GM12878 (cell line): ENCODE measurements at regions of chr22 and their contacts with region 1.

Region 1: GRCh38 chr22:50474668-50475492 is at the start of gene SBF1:
- DNase-seq: peak; percentile 43
- ATAC-seq: peak; percentile 81
- H3K4me3 ChIP-seq: peak within 1 kb of the TSS; percentile 96
- H3K27ac ChIP-seq: peak within 1 kb of the TSS; percentile 48; the same call in 1 of the 2 replicates
- H3K4me1 ChIP-seq: peaks cover 44% of the 10 kb centered on the region
- H3K27me3 ChIP-seq: no peaks in the 10 kb centered on the region
- CTCF ChIP-seq: no peak
- EP300 ChIP-seq: no peak
- POLR2A ChIP-seq: peak; percentile 63
- RAD21 ChIP-seq: no peak
- polyA plus RNA-seq, gene SBF1: 0.23 to 1.2 TPM

Region 2: DNA sequence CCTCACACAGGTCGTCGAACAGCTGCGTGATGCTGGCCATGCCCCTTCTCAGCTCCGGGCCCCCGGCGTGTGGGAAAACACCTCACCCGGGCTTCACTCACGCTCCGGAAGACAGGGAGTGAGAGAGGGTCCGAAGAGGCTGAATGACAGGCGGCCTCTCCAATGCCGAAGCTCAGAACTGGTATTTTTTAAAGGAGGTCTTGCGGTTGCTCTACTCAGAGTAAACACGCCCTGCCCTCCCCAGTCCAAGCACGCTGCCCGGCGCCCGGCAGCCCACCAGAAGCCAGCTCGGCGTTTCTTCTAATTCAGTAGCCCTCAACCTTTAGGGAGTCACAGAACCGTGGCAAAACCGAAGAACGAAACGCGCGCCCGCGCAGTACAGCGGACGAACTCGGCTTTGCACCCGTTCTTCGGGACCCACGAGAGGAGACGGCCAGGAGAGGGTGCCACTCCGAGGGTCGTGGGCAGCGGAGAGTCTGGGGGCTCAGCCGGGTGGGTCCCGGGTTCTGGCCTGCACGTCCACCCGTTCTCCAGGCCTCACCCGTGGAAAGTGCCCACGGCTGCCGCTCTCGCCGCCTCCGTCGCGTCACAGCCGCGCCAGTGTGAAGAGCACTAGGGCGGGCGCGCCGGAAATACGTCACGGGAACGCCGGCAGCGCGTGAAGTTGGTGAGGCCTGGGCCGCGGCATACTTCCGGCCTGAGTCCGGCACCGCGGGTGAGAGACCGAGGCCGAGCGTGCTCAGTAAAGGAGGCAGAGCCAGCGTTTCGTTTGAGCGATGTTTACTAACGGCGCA is 230.3 kb before region 1 on chr22 and contains the start of gene TUBGCP6:
- CTCF ChIA-PET with region 1: interaction called, 4 read pairs
- POLR2A ChIA-PET with region 1: no interaction called
- RAD21 ChIA-PET with region 1: interaction called, 3 read pairs
- SMC1A ChIA-PET with region 1: no interaction called
- in situ Hi-C with region 1: no loop called
- intact Hi-C with region 1: loop called (anchors 10 kb)
- DNase-seq: peak; percentile 53
- ATAC-seq: peak; percentile 86
- H3K4me3 ChIP-seq: peak within 1 kb of the TSS; percentile 83
- H3K27ac ChIP-seq: peak within 1 kb of the TSS; percentile 71
- H3K4me1 ChIP-seq: peaks cover 20% of the 10 kb centered on the region
- H3K27me3 ChIP-seq: no peaks in the 10 kb centered on the region
- CTCF ChIP-seq: peak in 2 of 3 experiments; percentile 13 to 34; a peak in 3 of 6 replicates
- EP300 ChIP-seq: peak in 1 of 2 experiments; percentile 30; a peak in 1 of 4 replicates
- POLR2A ChIP-seq: peak; percentile 97
- RAD21 ChIP-seq: no peak
- polyA plus RNA-seq, gene TUBGCP6: 0.74 to 2.0 TPM

Region 3: DNA sequence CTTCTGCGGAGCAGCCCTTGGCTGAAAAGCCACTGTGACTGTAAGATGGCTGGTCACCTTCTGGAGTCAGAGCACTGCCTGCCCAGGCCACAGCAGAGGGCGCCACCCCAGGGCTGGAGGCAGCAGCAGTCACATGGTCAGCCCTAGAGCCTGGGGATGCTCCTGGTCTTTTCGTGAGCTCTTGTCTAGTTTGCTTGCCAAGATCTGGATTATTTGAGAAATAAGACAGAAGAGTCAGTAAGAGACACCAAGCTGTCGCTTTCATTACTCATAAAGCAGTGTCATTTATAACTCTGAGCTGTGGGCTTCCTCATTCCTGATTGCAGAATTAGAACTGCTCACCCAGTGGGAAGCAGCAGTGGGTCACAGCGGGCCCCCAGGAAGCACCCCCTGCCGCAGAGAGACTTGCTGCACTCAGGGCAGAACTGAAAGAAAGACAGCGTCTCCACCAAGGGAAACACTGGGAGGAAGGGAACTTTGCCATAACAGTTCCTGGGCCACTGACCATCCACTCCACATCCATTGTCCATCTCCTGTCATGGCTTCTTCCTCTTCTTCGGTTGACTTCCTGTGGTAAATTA is 75.0 kb before region 1 on chr22:
- CTCF ChIA-PET with region 1: interaction called, 11 read pairs
- POLR2A ChIA-PET with region 1: no interaction called
- RAD21 ChIA-PET with region 1: no interaction called
- SMC1A ChIA-PET with region 1: interaction called, 3 read pairs
- in situ Hi-C with region 1: no loop called
- intact Hi-C with region 1: no loop called
- DNase-seq: no peak
- ATAC-seq: peak; percentile 84
- H3K4me3 ChIP-seq: no peak overlapping the region
- H3K27ac ChIP-seq: no peak overlapping the region
- H3K4me1 ChIP-seq: peaks cover 12% of the 10 kb centered on the region
- H3K27me3 ChIP-seq: no peaks in the 10 kb centered on the region
- CTCF ChIP-seq: peak; percentile 48 to 61 (median 52)
- EP300 ChIP-seq: no peak
- POLR2A ChIP-seq: no peak
- RAD21 ChIP-seq: peak; percentile 32; the same call in 1 of the 2 replicates

Region 4: DNA sequence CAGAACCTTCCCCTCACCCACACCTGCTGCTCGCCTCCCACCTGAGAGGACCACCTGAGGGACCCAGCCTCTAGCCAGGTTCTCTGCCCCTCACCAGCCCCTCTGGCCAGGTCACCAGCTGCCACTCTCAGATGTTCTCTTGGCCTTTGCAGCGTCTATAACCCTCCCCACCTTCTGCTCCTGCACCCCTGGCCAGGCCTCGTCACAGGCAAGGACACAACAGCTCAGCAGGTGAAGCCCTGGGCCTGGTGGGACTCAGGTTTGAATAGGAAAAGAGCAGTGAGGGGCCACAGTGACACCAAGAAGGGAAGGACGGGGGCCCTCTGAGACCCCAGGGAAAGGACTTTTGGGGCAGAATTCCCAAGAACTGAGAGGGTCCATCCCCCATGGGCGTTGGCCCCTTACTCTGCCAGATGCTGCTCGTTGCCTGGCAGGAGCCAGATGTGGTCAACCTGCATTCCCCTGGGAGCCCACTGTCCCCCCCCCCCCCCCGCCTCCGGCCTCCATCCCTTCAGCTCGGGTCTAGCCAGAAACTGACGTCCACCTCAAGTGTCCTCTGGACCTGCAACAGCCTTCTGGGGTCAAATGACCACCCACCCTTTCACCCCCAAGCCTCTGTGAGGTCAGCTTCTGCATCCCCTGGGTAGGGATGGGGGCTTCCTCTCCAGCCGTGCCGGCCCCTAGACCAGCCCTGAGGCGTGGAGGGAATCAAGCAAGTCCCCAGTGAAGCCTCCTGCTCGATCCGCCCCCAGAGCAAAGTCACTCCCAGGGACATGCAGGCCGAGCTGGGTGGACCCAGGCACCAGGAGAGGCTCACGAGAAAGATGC is 28.8 kb before region 1 on chr22:
- CTCF ChIA-PET with region 1: no interaction called
- POLR2A ChIA-PET with region 1: no interaction called
- RAD21 ChIA-PET with region 1: no interaction called
- SMC1A ChIA-PET with region 1: no interaction called
- in situ Hi-C with region 1: no loop called
- intact Hi-C with region 1: no loop called
- DNase-seq: no peak
- ATAC-seq: no peak
- H3K4me3 ChIP-seq: no peak overlapping the region
- H3K27ac ChIP-seq: no peak overlapping the region
- H3K4me1 ChIP-seq: no peaks in the 10 kb centered on the region; the same call in 1 of the 2 replicates
- H3K27me3 ChIP-seq: no peaks in the 10 kb centered on the region
- CTCF ChIP-seq: no peak
- EP300 ChIP-seq: no peak
- POLR2A ChIP-seq: peak; percentile 49
- RAD21 ChIP-seq: no peak

Region 5: GRCh38 chr22:50507991-50508884 is 33.4 kb after region 1 on chr22 and contains the start of gene NCAPH2:
- CTCF ChIA-PET with region 1: interaction called, 9 read pairs
- POLR2A ChIA-PET with region 1: interaction called, 4 read pairs
- RAD21 ChIA-PET with region 1: interaction called, 5 read pairs
- SMC1A ChIA-PET with region 1: no interaction called
- in situ Hi-C with region 1: no loop called
- intact Hi-C with region 1: loop called (anchors 1 kb)
- DNase-seq: peak; percentile 83
- ATAC-seq: peak; percentile 69
- H3K4me3 ChIP-seq: peak within 1 kb of the TSS; percentile 100
- H3K27ac ChIP-seq: peak within 1 kb of the TSS; percentile 90
- H3K4me1 ChIP-seq: peaks cover 9% of the 10 kb centered on the region
- H3K27me3 ChIP-seq: no peaks in the 10 kb centered on the region
- CTCF ChIP-seq: peak in 1 of 3 experiments; percentile 33; a peak in 2 of 6 replicates
- EP300 ChIP-seq: no peak
- POLR2A ChIP-seq: peak; percentile 98
- RAD21 ChIP-seq: peak; percentile 16; the same call in 1 of the 2 replicates
- polyA plus RNA-seq, gene NCAPH2: 5.0 to 16.9 TPM

Region 6: DNA sequence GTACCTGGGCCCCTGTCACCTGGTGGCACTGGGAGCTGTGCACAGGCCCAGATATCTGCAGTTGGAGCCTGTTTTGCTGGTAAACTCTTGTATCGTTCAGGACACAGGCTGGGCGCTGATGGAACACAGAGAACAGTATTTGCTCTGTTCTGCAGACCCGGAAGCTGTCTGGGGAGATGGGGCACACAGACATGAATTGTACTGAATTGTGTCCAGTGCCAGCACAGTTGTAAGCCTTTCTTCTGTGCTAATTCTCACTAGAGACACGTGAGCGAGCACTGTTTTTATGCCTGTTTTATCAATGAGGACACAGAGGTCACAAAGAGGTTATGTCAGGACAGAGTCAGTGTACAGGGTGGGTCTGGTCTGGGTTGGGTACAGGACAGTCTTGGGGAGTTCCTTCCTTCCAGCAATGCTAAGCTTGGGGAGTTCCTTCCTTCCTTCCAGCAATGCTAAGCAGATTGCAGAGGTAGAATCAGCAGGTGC is 238.7 kb after region 1 on chr22:
- CTCF ChIA-PET with region 1: no interaction called
- POLR2A ChIA-PET with region 1: no interaction called
- RAD21 ChIA-PET with region 1: no interaction called
- SMC1A ChIA-PET with region 1: no interaction called
- in situ Hi-C with region 1: no loop called
- intact Hi-C with region 1: no loop called
- DNase-seq: no peak
- ATAC-seq: no peak
- H3K4me3 ChIP-seq: no peak overlapping the region
- H3K27ac ChIP-seq: no peak overlapping the region
- H3K4me1 ChIP-seq: no peaks in the 10 kb centered on the region
- H3K27me3 ChIP-seq: peaks cover 0 to 7% of the 10 kb centered on the region in 2 experiments; a peak in 2 of 4 replicates
- CTCF ChIP-seq: no peak
- EP300 ChIP-seq: no peak
- POLR2A ChIP-seq: no peak
- RAD21 ChIP-seq: no peak